Activated naive CD4-positive, alpha-beta T cell treated with anti-CD3 and anti-CD28 coated beads for 36 hours (primary cell): ENCODE measurements at regions of chr10 and their contacts with region 1.

Region 1: DNA sequence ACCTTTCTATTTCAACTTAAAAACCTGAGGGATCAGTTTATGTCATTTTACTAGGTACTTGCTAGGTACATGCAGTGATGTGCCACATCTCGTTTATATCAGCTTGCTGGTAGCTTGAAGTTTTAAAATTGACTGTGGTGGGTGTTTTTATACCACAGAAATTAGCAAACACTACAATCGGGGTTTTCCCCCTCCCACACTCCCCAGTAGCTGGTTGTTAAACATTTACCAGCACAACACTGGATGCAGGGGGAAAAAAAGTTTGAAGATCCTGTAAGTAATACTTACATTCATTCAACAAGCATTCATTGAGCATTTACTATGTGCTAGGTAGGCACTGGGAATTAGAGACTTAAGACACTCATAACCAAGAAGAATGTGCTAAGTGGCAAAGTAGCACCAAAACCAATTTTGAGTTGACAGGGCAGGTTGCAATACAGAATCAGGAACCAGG is 32.6 kb downstream of the USP6NL start:
- DNase-seq: peak; percentile 84
- H3K4me3 Mint-ChIP-seq: no peak overlapping the region
- H3K27ac Mint-ChIP-seq: peak overlapping the region; percentile 25
- H3K4me1 Mint-ChIP-seq: peaks cover 58% of the 10 kb centered on the region
- H3K27me3 Mint-ChIP-seq: no peaks in the 10 kb centered on the region

Region 2: DNA sequence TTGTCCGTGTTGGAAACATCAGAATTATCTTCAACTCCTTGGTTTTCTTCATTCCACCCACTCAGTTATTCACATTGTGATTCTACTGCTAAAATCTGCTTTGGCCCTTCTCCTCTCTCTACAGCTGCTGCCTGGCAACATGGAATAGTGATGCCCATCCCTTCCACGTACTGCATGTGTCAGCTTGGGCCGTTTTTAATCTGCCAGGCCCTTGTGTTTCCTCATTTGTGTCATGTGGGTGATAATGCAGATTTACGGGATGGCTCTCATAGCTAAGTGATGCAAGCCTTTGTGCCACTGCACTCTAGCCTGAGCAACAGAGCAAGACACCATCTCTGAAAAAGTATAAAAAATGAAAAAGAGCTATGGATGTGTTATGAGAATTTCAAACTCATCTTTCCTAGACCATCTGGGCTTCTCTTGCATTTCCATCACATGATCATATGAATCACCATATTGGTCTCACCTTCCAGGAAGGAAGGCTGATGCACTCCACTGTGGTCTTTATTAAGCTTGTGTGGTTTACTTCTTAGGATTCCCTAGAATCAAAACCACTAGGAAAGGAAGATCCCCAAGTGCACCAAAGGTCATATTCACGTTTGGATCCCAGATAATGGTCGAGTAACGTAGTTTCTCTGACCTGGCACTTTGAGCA is 581.7 kb before region 1 on chr10:
- CTCF ChIA-PET with region 1: no interaction called
- intact Hi-C with region 1: no loop called
- DNase-seq: no peak
- H3K4me3 Mint-ChIP-seq: no peak overlapping the region
- H3K27ac Mint-ChIP-seq: no peak overlapping the region
- H3K4me1 Mint-ChIP-seq: no peaks in the 10 kb centered on the region
- H3K27me3 Mint-ChIP-seq: peaks cover 5% of the 10 kb centered on the region

Region 3: GRCh38 chr10:11539191-11539868 is 39.5 kb before region 1 on chr10:
- CTCF ChIA-PET with region 1: no interaction called
- intact Hi-C with region 1: loop called (anchors 1 kb)
- DNase-seq: peak; percentile 25
- H3K4me3 Mint-ChIP-seq: no peak overlapping the region
- H3K27ac Mint-ChIP-seq: no peak overlapping the region
- H3K4me1 Mint-ChIP-seq: peaks cover 19% of the 10 kb centered on the region
- H3K27me3 Mint-ChIP-seq: no peaks in the 10 kb centered on the region

Region 4: GRCh38 chr10:11601670-11602069 is 22.8 kb after region 1 on chr10:
- CTCF ChIA-PET with region 1: interaction called, 3 read pairs
- intact Hi-C with region 1: loop called (anchors 1 kb)
- DNase-seq: no peak
- H3K4me3 Mint-ChIP-seq: no peak overlapping the region
- H3K27ac Mint-ChIP-seq: no peak overlapping the region
- H3K4me1 Mint-ChIP-seq: peaks cover 55% of the 10 kb centered on the region
- H3K27me3 Mint-ChIP-seq: no peaks in the 10 kb centered on the region

Region 5: DNA sequence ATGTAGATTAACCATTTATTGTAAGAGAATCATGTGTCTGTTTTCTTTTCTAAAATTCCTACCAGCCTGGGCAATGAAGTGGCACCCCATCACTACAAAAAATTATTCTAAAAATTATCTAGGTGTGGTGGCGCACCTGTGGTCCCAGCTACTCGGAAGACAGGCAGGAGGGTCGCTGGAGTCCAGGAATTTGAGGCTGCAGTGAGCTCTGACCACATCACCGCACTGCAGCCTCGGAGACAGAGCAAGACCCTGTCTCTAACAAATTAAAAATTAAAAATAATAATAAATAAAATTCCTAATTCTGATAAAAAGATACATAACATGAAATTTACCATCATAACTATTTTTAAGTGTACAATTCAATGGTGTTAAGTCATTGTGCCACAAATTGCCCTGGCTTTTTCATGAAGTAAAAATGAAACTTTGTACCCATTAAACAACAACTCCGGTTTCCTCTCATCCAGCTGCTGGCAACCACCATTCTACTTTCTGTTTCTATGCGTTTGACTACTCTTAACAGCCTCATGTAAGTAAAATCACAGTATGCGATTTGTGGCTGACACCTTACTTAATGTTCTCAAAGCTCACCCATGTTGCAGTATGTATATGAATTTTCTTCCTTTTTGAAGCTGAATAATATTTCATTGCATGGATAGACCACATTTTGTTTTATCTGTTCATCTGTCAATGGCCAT is 53.2 kb after region 1 on chr10:
- CTCF ChIA-PET with region 1: no interaction called
- intact Hi-C with region 1: loop called (anchors 1 kb)
- DNase-seq: peak; percentile 76
- H3K4me3 Mint-ChIP-seq: no peak overlapping the region
- H3K27ac Mint-ChIP-seq: no peak overlapping the region
- H3K4me1 Mint-ChIP-seq: peaks cover 13% of the 10 kb centered on the region
- H3K27me3 Mint-ChIP-seq: no peaks in the 10 kb centered on the region

Region 6: GRCh38 chr10:11713186-11713743 is 134.4 kb after region 1 on chr10:
- CTCF ChIA-PET with region 1: no interaction called
- intact Hi-C with region 1: loop called (anchors 1 kb)
- DNase-seq: no peak
- H3K4me3 Mint-ChIP-seq: no peak overlapping the region
- H3K27ac Mint-ChIP-seq: no peak overlapping the region
- H3K4me1 Mint-ChIP-seq: peaks cover 17% of the 10 kb centered on the region
- H3K27me3 Mint-ChIP-seq: peaks cover 32% of the 10 kb centered on the region